ENCODE measurements at regions of chr13 and their contacts with region 1.

Region 1: GRCh38 chr13:91381371-91381770 is 17.1 kb upstream of the GPC5 start:
- DNase-seq: no peak
- ATAC-seq: no peak
- H3K4me3 ChIP-seq: no peak overlapping the region
- H3K27ac ChIP-seq: no peak overlapping the region
- H3K4me1 ChIP-seq: no peaks in the 10 kb centered on the region
- H3K27me3 ChIP-seq: no peaks in the 10 kb centered on the region
- CTCF ChIP-seq: peak; percentile 41; the same call in 1 of the 2 replicates

Region 2: GRCh38 chr13:91247768-91248167 is 133.6 kb before region 1 on chr13:
- CTCF ChIA-PET with region 1: no interaction called
- POLR2A ChIA-PET with region 1: no interaction called
- in situ Hi-C with region 1: no loop called
- intact Hi-C with region 1: no loop called
- DNase-seq: no peak
- ATAC-seq: no peak
- H3K4me3 ChIP-seq: no peak overlapping the region
- H3K27ac ChIP-seq: no peak overlapping the region
- H3K4me1 ChIP-seq: no peaks in the 10 kb centered on the region
- H3K27me3 ChIP-seq: no peaks in the 10 kb centered on the region
- CTCF ChIP-seq: peak; percentile 20; the same call in 1 of the 2 replicates

Region 3: GRCh38 chr13:91722267-91722884 is 341.0 kb after region 1 on chr13:
- CTCF ChIA-PET with region 1: interaction called, 4 read pairs
- POLR2A ChIA-PET with region 1: no interaction called
- in situ Hi-C with region 1: no loop called
- intact Hi-C with region 1: loop called (anchors 5 kb)
- DNase-seq: no peak
- ATAC-seq: no peak
- H3K4me3 ChIP-seq: no peak overlapping the region
- H3K27ac ChIP-seq: no peak overlapping the region
- H3K4me1 ChIP-seq: no peaks in the 10 kb centered on the region
- H3K27me3 ChIP-seq: no peaks in the 10 kb centered on the region
- CTCF ChIP-seq: peak; percentile 51; the same call in 1 of the 2 replicates

Region 4: GRCh38 chr13:91785431-91786119 is 404.2 kb after region 1 on chr13:
- CTCF ChIA-PET with region 1: no interaction called
- POLR2A ChIA-PET with region 1: no interaction called
- in situ Hi-C with region 1: no loop called
- intact Hi-C with region 1: loop called (anchors 10 kb)
- DNase-seq: no peak
- ATAC-seq: no peak
- H3K4me3 ChIP-seq: no peak overlapping the region
- H3K27ac ChIP-seq: no peak overlapping the region
- H3K4me1 ChIP-seq: no peaks in the 10 kb centered on the region
- H3K27me3 ChIP-seq: no peaks in the 10 kb centered on the region
- CTCF ChIP-seq: no peak

Measured in Panc1 (cell line).